Cardiac septum (tissue), 1 donor: ENCODE measurements at regions of chr6 and their contacts with region 1.

Region 1: GRCh38 chr6:40599555-40599954 is 12.4 kb upstream of the LRFN2 start:
- DNase-seq: no peak

Region 2: GRCh38 chr6:40308533-40309306 is 290.8 kb before region 1 on chr6:
- intact Hi-C with region 1: no loop called
- DNase-seq: no peak

Region 3: DNA sequence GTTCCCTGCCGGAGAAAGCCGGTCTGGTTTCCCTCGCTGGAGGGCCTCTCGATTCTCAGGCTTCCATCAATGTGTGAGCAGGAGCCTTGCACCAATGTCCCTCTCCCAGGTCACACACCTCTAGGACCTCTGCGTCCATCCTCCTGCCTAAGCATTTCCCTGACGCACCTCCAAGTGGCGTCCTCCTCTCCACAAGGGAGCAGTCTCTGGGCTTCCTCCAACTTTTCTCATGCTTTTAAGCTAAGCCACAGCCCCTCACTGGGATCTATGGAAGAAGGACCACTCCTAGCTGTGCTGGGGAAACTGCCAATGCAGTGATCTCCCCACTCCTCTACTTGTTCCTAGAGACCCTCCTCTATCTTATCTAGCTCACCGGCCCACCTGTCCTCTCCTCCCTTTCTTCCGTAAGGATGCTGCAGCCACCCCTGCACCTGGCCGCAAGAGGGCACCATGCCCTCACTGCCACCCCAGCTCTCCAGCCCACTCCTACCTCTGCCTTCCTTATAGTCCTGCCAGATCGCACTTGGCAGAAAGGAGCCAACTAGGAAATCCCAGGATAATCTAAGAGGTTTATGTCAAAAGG is 271.1 kb before region 1 on chr6:
- intact Hi-C with region 1: loop called (anchors 10 kb)
- DNase-seq: no peak

Region 4: GRCh38 chr6:40611912-40612311 is 12.4 kb after region 1 on chr6:
- intact Hi-C with region 1: no loop called
- DNase-seq: no peak